Activated CD4-positive, alpha-beta T cell treated with anti-CD3 and anti-CD28 coated beads for 36 hours (primary cell): ENCODE measurements at regions of chr7 and their contacts with region 1.

Region 1: GRCh38 chr7:155456738-155457564 is 978 bp upstream of the EN2 start:
- DNase-seq: peak; percentile 69
- ATAC-seq: peak; percentile 33
- H3K4me3 Mint-ChIP-seq: peak overlapping the region; percentile 54
- H3K27ac Mint-ChIP-seq: no peak overlapping the region
- H3K4me1 Mint-ChIP-seq: peaks cover 18% of the 10 kb centered on the region
- H3K27me3 Mint-ChIP-seq: peaks cover 67% of the 10 kb centered on the region

Region 2: GRCh38 chr7:155371884-155372781 is 84.8 kb before region 1 on chr7:
- CTCF ChIA-PET with region 1: no interaction called
- POLR2A ChIA-PET with region 1: no interaction called
- intact Hi-C with region 1: loop called (anchors 2 kb)
- DNase-seq: peak; percentile 45
- ATAC-seq: peak; percentile 74
- H3K4me3 Mint-ChIP-seq: no peak overlapping the region
- H3K27ac Mint-ChIP-seq: no peak overlapping the region
- H3K4me1 Mint-ChIP-seq: peaks cover 29% of the 10 kb centered on the region
- H3K27me3 Mint-ChIP-seq: peaks cover 65% of the 10 kb centered on the region

Region 3: GRCh38 chr7:155466814-155467733 is 10.1 kb after region 1 on chr7:
- CTCF ChIA-PET with region 1: no interaction called
- POLR2A ChIA-PET with region 1: no interaction called
- intact Hi-C with region 1: loop called in 1 of 2 experiments (anchors 1 kb)
- DNase-seq: peak; percentile 81
- ATAC-seq: peak; percentile 70
- H3K4me3 Mint-ChIP-seq: no peak overlapping the region
- H3K27ac Mint-ChIP-seq: no peak overlapping the region
- H3K4me1 Mint-ChIP-seq: peaks cover 11% of the 10 kb centered on the region
- H3K27me3 Mint-ChIP-seq: peaks cover 76% of the 10 kb centered on the region